Posterior vena cava (tissue), 2 donors: ENCODE measurements at regions of chr1 and their contacts with region 1.

Region 1: DNA sequence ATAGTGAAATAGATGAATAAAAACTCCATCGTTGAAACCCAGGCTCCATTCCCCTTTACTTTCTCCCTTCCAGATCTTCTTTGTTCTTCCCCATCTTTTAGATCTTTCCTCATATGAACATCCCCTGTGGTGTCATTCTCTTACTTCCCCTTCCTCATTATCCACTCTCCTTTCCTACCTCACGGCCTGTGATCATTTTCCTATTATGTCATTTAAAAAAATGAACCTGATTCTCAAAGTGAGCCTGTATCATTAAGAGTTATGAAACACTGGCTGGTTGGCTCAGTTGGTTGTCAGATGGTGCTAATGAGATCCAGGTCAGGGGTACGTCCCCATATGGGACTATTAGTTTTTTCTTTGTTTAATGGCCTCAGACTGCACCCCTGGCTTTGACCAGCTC is 38.3 kb downstream of the TCEANC2 start:
- DNase-seq: no peak

Region 2: DNA sequence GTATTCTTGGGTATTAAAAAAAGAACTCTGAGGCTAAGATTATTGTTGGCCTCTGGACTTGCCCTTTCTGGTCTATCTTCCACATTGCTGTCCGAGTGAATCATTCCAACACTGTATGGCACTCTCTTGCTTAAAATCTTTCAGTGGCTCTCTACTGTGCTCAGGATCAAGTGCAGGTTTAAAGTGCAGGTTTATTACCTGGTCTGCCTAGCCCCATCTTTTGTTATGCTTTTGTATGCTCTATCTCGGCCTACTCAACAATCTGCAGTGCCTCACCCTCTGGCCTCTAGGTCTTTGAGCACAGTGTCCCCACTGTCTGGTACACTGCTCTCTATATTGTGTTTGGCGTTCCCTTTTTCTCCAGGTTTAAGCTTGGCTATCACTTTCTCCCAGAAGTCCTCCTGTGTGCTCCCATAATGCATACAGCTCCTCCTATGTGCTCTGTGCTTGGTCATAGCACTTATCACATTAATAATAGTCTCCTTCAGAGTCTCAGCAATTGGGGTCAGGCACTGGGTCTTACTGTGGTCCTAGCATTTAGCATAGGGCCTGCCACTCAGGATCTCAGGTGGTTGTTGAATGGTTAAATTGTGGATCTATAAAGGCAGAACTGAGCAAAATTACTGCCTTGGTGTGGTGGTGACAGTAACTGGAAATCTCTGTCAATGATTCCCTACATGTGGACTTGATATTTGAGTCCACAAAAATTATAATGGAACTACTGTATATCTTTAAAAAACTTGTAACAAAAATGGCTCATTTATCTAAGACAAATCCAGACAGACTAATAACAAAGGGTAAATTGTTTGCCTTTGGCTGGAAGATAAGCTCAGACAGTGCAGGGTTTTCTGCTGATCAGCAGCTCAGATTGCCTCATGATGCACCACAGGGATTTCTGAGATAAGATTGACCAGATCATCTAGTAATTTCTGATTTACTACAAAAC is 63.1 kb before region 1 on chr1:
- intact Hi-C with region 1: loop called in 1 of 2 experiments (anchors 2 kb)
- DNase-seq: no peak

Region 3: GRCh38 chr1:54037476-54037875 is 54.2 kb before region 1 on chr1:
- intact Hi-C with region 1: loop called in 1 of 2 experiments (anchors 2 kb)
- DNase-seq: no peak

Region 4: DNA sequence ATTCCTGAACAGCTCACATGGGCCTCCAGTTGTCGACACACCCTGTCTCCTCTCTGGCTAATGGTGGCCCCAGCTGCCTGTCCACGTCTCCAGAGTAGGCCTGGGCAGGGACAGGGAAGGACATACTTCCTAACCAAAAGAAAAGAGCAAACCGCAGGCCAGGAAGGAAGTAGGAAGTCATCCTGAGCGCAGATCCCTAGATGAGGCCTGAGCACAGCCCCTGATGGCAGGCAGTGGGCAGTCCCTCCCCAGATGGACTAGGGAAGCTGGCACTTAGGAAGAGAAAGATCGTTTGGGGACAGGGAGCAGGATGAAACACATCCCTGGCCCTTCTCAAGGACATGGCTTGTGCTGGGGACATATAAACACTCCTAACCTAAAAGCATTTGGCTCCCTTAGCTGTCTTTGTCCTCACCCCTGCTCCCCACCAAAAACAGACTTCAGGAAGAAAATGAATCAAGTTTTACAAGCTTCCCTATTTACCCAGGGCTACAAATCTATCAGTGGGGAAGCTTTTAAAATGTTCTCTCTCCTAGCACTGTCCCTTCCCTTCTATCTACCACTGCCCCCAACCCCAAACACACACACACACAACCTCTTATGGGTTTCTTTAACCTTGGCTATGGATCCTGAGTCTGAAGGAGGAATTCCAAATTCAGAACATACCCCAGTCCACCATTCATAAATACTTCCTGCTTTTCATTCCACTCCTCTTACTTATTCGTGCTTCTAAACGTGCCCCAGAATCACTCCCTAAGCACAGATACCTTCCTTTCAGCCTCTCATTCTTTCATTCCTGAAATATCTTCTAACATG is 293.5 kb after region 1 on chr1:
- intact Hi-C with region 1: no loop called
- DNase-seq: no peak